CD8-positive, alpha-beta T cell (primary cell): ENCODE measurements at regions of chr9 and their contacts with region 1.

Region 1: DNA sequence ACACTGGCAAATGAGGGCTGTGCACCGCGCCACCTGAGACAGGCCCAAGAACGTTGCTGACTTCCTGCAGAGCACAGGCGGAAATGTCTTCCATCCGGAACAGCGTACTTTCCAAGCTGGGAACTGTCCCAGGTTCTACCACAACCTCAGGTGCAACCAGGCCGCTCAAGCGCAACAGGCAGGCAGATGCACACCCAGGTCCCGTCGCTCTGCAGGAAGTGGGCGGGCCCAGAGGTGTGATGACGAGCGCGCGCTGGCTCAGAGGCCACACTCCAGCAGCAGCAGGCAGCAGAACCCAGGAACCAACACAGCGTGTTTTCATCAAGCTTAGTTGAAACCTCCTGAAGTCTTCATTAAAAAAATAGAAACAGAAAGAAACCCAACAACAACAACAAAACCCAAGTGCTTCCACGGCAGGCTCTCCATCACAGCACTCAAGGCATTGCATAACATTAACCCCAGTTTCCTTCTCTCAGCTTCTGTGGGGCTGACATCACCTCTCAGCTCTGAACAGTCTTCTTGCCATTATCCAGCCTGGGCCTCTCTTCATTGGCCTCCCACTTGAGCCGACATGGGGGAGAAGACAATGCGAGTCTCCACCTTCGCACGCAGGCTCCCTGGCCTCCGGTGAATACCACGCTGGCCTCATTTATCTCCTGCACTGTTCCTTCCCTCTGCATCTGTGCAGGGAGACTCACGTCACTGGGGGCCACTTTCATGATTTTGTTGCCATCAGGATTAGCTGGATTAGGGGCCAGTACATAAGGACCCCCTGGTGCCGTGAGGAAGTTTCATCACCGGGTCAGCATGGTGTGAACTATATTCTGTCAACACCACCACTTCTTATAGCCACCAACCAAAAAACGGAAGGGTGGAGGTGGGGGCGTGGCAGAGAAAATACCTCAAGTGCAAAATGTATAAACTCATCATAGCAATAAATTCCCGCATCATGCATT is 22.1 kb downstream of the PTCH1 start:
- DNase-seq: peak; percentile 71 to 95 (median 88)
- ATAC-seq: peak; percentile 95
- H3K4me3 ChIP-seq: peak overlapping the region; percentile 28 to 38
- H3K4me3 Mint-ChIP-seq: peak overlapping the region; percentile 83
- H3K27ac ChIP-seq: peak overlapping the region; percentile 69
- H3K27ac Mint-ChIP-seq: peak overlapping the region; percentile 96
- H3K4me1 ChIP-seq: peaks cover 81% of the 10 kb centered on the region
- H3K4me1 Mint-ChIP-seq: peaks cover 78% of the 10 kb centered on the region
- H3K27me3 ChIP-seq: no peaks in the 10 kb centered on the region
- H3K27me3 Mint-ChIP-seq: peaks cover 6% of the 10 kb centered on the region
- CTCF ChIP-seq: no peak

Region 2: DNA sequence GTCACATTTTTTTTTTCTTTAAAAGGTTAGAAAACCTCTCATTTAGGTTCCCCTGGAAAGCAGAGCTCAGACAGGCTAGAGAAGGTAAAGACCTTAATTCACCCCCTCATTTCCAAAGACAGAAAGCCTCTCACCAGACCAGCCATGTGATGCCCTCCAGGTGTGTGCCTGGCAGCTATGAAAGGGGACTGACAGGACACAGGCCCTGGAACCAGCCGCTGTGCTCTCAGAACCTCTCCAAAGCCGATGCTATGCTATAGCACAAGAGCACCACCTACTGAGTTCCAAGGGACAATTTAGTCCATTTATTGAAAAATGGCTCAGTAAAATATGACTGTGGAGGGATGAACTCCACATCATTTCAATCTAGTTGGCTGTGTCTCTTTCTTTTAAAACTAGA is 226.0 kb before region 1 on chr9:
- CTCF ChIA-PET with region 1: no interaction called
- POLR2A ChIA-PET with region 1: no interaction called
- intact Hi-C with region 1: no loop called
- DNase-seq: peak in 1 of 9 experiments; percentile 10
- ATAC-seq: no peak
- H3K4me3 ChIP-seq: no peak overlapping the region
- H3K4me3 Mint-ChIP-seq: no peak overlapping the region
- H3K27ac ChIP-seq: no peak overlapping the region
- H3K27ac Mint-ChIP-seq: no peak overlapping the region
- H3K4me1 ChIP-seq: no peaks in the 10 kb centered on the region
- H3K4me1 Mint-ChIP-seq: peaks cover 16% of the 10 kb centered on the region
- H3K27me3 ChIP-seq: no peaks in the 10 kb centered on the region
- H3K27me3 Mint-ChIP-seq: no peaks in the 10 kb centered on the region
- CTCF ChIP-seq: no peak

Region 3: GRCh38 chr9:95317119-95317892 is 177.4 kb before region 1 on chr9 and contains the start of gene FANCC:
- CTCF ChIA-PET with region 1: no interaction called
- POLR2A ChIA-PET with region 1: no interaction called
- intact Hi-C with region 1: loop called in 1 of 2 experiments (anchors 5 kb)
- DNase-seq: peak; percentile 71 to 93 (median 85)
- ATAC-seq: peak; percentile 79
- H3K4me3 ChIP-seq: peak within 1 kb of the TSS; percentile 87 to 99
- H3K4me3 Mint-ChIP-seq: peak within 1 kb of the TSS; percentile 94
- H3K27ac ChIP-seq: peak within 1 kb of the TSS; percentile 75 to 78
- H3K27ac Mint-ChIP-seq: peak within 1 kb of the TSS; percentile 91
- H3K4me1 ChIP-seq: peaks cover 12% of the 10 kb centered on the region
- H3K4me1 Mint-ChIP-seq: peaks cover 22% of the 10 kb centered on the region
- H3K27me3 ChIP-seq: no peaks in the 10 kb centered on the region
- H3K27me3 Mint-ChIP-seq: peaks cover 4% of the 10 kb centered on the region
- CTCF ChIP-seq: no peak
- total RNA-seq, gene FANCC: 4.2 to 6.1 TPM

Region 4: GRCh38 chr9:95510709-95511615 is 16.3 kb after region 1 on chr9:
- CTCF ChIA-PET with region 1: interaction called, 7 read pairs
- POLR2A ChIA-PET with region 1: interaction called, 12 read pairs
- intact Hi-C with region 1: loop called (anchors 1 to 2 kb)
- DNase-seq: peak; percentile 51 to 92 (median 81)
- ATAC-seq: peak; percentile 32
- H3K4me3 ChIP-seq: peak overlapping the region; percentile 60 to 72
- H3K4me3 Mint-ChIP-seq: peak overlapping the region; percentile 93
- H3K27ac ChIP-seq: peak overlapping the region; percentile 45
- H3K27ac Mint-ChIP-seq: peak overlapping the region; percentile 79
- H3K4me1 ChIP-seq: peaks cover 26% of the 10 kb centered on the region
- H3K4me1 Mint-ChIP-seq: peaks cover 41% of the 10 kb centered on the region
- H3K27me3 ChIP-seq: no peaks in the 10 kb centered on the region
- H3K27me3 Mint-ChIP-seq: peaks cover 22% of the 10 kb centered on the region
- CTCF ChIP-seq: no peak

Region 5: GRCh38 chr9:95570150-95570549 is 75.5 kb after region 1 on chr9:
- CTCF ChIA-PET with region 1: no interaction called
- POLR2A ChIA-PET with region 1: no interaction called
- intact Hi-C with region 1: loop called in 1 of 2 experiments (anchors 5 kb)
- DNase-seq: no peak
- ATAC-seq: no peak
- H3K4me3 ChIP-seq: no peak overlapping the region
- H3K4me3 Mint-ChIP-seq: peak overlapping the region; percentile 39
- H3K27ac ChIP-seq: no peak overlapping the region
- H3K27ac Mint-ChIP-seq: no peak overlapping the region
- H3K4me1 ChIP-seq: peaks cover 15% of the 10 kb centered on the region
- H3K4me1 Mint-ChIP-seq: peaks cover 15% of the 10 kb centered on the region
- H3K27me3 ChIP-seq: peaks cover 16 to 18% of the 10 kb centered on the region in 2 experiments
- H3K27me3 Mint-ChIP-seq: peaks cover 48% of the 10 kb centered on the region
- CTCF ChIP-seq: no peak

Region 6: GRCh38 chr9:95887926-95888497 is 393.3 kb after region 1 on chr9:
- CTCF ChIA-PET with region 1: no interaction called
- POLR2A ChIA-PET with region 1: no interaction called
- intact Hi-C with region 1: loop called in 1 of 2 experiments (anchors 5 kb)
- DNase-seq: peak in 2 of 9 experiments; percentile 39 to 69
- ATAC-seq: peak; percentile 80
- H3K4me3 ChIP-seq: peak overlapping the region in 1 of 2 experiments; percentile 25
- H3K4me3 Mint-ChIP-seq: peak overlapping the region; percentile 71
- H3K27ac ChIP-seq: peak overlapping the region; percentile 14 to 63
- H3K27ac Mint-ChIP-seq: peak overlapping the region; percentile 88
- H3K4me1 ChIP-seq: peaks cover 80% of the 10 kb centered on the region
- H3K4me1 Mint-ChIP-seq: peaks cover 79% of the 10 kb centered on the region
- H3K27me3 ChIP-seq: no peaks in the 10 kb centered on the region
- H3K27me3 Mint-ChIP-seq: no peaks in the 10 kb centered on the region
- CTCF ChIP-seq: no peak

Region 7: GRCh38 chr9:96217754-96218693 is 723.3 kb after region 1 on chr9:
- CTCF ChIA-PET with region 1: interaction called, 4 read pairs
- POLR2A ChIA-PET with region 1: no interaction called
- intact Hi-C with region 1: loop called (anchors 2 to 5 kb)
- DNase-seq: peak; percentile 48 to 88 (median 77)
- ATAC-seq: peak; percentile 81
- H3K4me3 ChIP-seq: peak overlapping the region; percentile 9 to 27
- H3K4me3 Mint-ChIP-seq: peak overlapping the region; percentile 80
- H3K27ac ChIP-seq: no peak overlapping the region
- H3K27ac Mint-ChIP-seq: no peak overlapping the region
- H3K4me1 ChIP-seq: peaks cover 8% of the 10 kb centered on the region
- H3K4me1 Mint-ChIP-seq: peaks cover 12% of the 10 kb centered on the region
- H3K27me3 ChIP-seq: peaks cover 0 to 8% of the 10 kb centered on the region in 2 experiments
- H3K27me3 Mint-ChIP-seq: peaks cover 37% of the 10 kb centered on the region
- CTCF ChIP-seq: peak; percentile 98

Region 8: GRCh38 chr9:96317335-96317980 is 822.8 kb after region 1 on chr9:
- CTCF ChIA-PET with region 1: no interaction called
- POLR2A ChIA-PET with region 1: no interaction called
- intact Hi-C with region 1: no loop called
- DNase-seq: peak in 7 of 9 experiments; percentile 13 to 73 (median 61)
- ATAC-seq: no peak
- H3K4me3 ChIP-seq: no peak overlapping the region
- H3K4me3 Mint-ChIP-seq: no peak overlapping the region
- H3K27ac ChIP-seq: no peak overlapping the region
- H3K27ac Mint-ChIP-seq: no peak overlapping the region
- H3K4me1 ChIP-seq: no peaks in the 10 kb centered on the region
- H3K4me1 Mint-ChIP-seq: no peaks in the 10 kb centered on the region
- H3K27me3 ChIP-seq: no peaks in the 10 kb centered on the region
- H3K27me3 Mint-ChIP-seq: no peaks in the 10 kb centered on the region
- CTCF ChIP-seq: peak; percentile 80